ENCODE measurements at regions of chr16 and their contacts with region 1.

Region 1: GRCh38 chr16:15777533-15778203 is 79.2 kb downstream of the MYH11 start:
- DNase-seq: no peak
- ATAC-seq: peak; percentile 65
- H3K4me3 ChIP-seq: no peak overlapping the region
- H3K27ac ChIP-seq: no peak overlapping the region
- H3K4me1 ChIP-seq: no peaks in the 10 kb centered on the region
- H3K27me3 ChIP-seq: no peaks in the 10 kb centered on the region; a peak in 1 of 4 replicates
- CTCF ChIP-seq: peak; percentile 40 to 60 (median 54)
- EP300 ChIP-seq: no peak
- POLR2A ChIP-seq: no peak
- RAD21 ChIP-seq: peak; percentile 70

Region 2: GRCh38 chr16:15749366-15749765 is 28.3 kb before region 1 on chr16:
- CTCF ChIA-PET with region 1: no interaction called
- POLR2A ChIA-PET with region 1: no interaction called
- RAD21 ChIA-PET with region 1: no interaction called
- SMC1A ChIA-PET with region 1: no interaction called
- in situ Hi-C with region 1: no loop called
- intact Hi-C with region 1: no loop called
- DNase-seq: no peak
- ATAC-seq: no peak
- H3K4me3 ChIP-seq: no peak overlapping the region
- H3K27ac ChIP-seq: no peak overlapping the region
- H3K4me1 ChIP-seq: no peaks in the 10 kb centered on the region
- H3K27me3 ChIP-seq: no peaks in the 10 kb centered on the region
- CTCF ChIP-seq: no peak
- EP300 ChIP-seq: no peak
- POLR2A ChIP-seq: no peak
- RAD21 ChIP-seq: no peak

Region 3: DNA sequence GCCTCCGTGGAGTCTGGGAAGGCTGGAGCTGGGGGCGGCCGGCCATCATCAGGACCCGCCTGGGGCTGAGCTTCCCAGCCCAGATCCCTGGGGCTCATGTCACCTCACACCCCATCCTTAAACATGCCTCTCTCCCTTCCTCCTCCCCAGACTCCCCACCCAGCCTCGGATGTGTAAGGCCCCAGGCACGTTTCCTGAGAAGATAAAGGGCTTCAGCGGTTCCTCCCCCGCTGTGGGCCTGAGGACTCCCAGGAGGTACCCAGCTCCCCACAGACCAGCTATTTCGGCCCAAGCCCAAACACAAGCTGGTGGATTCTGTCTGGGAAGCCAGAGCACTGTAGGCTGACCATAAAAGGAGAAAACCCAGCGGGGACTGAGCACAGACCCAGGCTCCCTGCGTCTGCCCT is 29.9 kb after region 1 on chr16:
- CTCF ChIA-PET with region 1: no interaction called
- POLR2A ChIA-PET with region 1: no interaction called
- RAD21 ChIA-PET with region 1: no interaction called
- SMC1A ChIA-PET with region 1: no interaction called
- in situ Hi-C with region 1: no loop called
- intact Hi-C with region 1: no loop called
- DNase-seq: no peak
- ATAC-seq: no peak
- H3K4me3 ChIP-seq: no peak overlapping the region
- H3K27ac ChIP-seq: no peak overlapping the region
- H3K4me1 ChIP-seq: peaks cover 4% of the 10 kb centered on the region
- H3K27me3 ChIP-seq: no peaks in the 10 kb centered on the region
- CTCF ChIP-seq: no peak
- EP300 ChIP-seq: no peak
- POLR2A ChIP-seq: no peak
- RAD21 ChIP-seq: no peak

Region 4: DNA sequence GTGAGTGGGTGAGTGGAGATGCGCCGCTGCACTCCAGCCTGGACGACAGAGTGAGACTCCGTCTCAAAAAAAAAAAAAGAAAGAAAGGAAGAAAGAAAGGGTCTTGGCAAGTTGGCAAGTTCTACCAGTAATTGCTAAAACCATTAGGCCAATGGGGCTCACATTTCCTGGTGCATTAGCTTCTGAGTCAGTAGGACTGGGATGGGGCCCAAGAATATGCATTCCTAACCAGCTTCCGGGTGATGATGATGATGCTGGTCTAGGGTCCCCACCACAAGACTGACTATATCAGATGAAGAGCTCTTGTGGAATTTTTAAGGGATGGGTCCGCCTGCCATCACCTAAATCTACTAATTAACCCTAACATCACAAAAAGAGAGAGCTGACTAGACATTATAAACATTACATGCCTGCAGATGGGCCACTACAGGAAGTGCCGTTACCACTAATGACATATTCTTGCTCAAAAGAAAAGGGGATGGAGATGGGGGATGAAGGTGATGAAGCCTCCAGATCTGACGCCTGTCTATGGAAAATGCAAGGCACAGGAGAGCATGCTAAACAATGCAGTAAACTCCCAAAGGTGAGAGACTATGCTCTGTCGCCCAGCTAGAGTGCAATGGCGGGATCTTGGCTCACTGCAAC is 66.1 kb after region 1 on chr16:
- CTCF ChIA-PET with region 1: no interaction called
- POLR2A ChIA-PET with region 1: no interaction called
- RAD21 ChIA-PET with region 1: no interaction called
- SMC1A ChIA-PET with region 1: no interaction called
- in situ Hi-C with region 1: no loop called
- intact Hi-C with region 1: no loop called
- DNase-seq: no peak
- ATAC-seq: no peak
- H3K4me3 ChIP-seq: no peak overlapping the region
- H3K27ac ChIP-seq: no peak overlapping the region
- H3K4me1 ChIP-seq: no peaks in the 10 kb centered on the region
- H3K27me3 ChIP-seq: no peaks in the 10 kb centered on the region
- CTCF ChIP-seq: no peak
- EP300 ChIP-seq: no peak
- POLR2A ChIP-seq: no peak
- RAD21 ChIP-seq: no peak

Region 5: DNA sequence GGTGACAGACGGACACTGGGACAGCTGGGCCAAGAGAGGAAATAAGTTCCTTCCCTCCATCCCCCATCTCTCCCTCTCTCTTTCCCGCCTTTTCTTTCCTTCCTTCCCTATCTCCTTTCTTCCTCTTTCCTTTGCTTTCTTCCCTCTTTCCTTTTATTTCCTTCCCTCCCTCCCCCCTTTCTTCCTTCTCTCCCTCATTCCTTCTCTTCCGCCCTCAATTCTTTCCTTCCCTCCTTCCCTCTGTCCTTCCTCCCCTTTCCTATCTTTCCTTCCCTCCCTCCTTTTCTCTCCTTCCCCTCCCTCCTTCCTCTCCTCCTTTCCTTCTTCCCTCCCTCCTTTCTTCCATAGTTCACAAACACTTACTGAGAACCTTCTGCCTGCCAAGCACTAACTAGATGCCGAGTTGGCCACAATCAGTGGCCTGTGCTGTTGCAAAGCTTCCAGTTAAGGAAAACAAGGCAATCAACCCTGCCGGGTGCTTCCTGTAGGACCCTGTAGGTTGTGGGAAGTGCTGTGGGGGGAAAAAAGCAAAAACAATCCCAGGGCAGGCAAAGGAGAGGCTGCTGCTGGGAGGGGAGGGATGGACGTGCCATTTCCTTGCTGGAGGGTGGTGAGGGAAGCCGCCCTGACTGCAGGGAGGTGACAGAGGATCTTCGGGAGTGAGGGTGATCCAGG is 414.0 kb after region 1 on chr16:
- CTCF ChIA-PET with region 1: interaction called, 9 read pairs
- POLR2A ChIA-PET with region 1: no interaction called
- RAD21 ChIA-PET with region 1: no interaction called
- SMC1A ChIA-PET with region 1: no interaction called
- in situ Hi-C with region 1: loop called (anchors 5 kb)
- intact Hi-C with region 1: no loop called
- DNase-seq: no peak
- ATAC-seq: no peak
- H3K4me3 ChIP-seq: no peak overlapping the region
- H3K27ac ChIP-seq: no peak overlapping the region
- H3K4me1 ChIP-seq: no peaks in the 10 kb centered on the region
- H3K27me3 ChIP-seq: no peaks in the 10 kb centered on the region; a peak in 1 of 4 replicates
- CTCF ChIP-seq: no peak
- EP300 ChIP-seq: no peak
- POLR2A ChIP-seq: no peak
- RAD21 ChIP-seq: no peak

Measured in GM12878 (cell line).